ENCODE measurements at regions of chr13 and their contacts with region 1.

Region 1: GRCh38 chr13:95479731-95480130 is 72.8 kb upstream of the CLDN10 start:
- DNase-seq: no peak
- H3K4me3 ChIP-seq: no peak overlapping the region
- H3K27ac ChIP-seq: peak overlapping the region in 2 of 5 donors; percentile 47 to 58
- H3K4me1 ChIP-seq: peaks cover 10 to 13% of the 10 kb centered on the region in 2 donors
- H3K27me3 ChIP-seq: no peaks in the 10 kb centered on the region
- CTCF ChIP-seq: no peak
- POLR2A ChIP-seq: no peak

Region 2: DNA sequence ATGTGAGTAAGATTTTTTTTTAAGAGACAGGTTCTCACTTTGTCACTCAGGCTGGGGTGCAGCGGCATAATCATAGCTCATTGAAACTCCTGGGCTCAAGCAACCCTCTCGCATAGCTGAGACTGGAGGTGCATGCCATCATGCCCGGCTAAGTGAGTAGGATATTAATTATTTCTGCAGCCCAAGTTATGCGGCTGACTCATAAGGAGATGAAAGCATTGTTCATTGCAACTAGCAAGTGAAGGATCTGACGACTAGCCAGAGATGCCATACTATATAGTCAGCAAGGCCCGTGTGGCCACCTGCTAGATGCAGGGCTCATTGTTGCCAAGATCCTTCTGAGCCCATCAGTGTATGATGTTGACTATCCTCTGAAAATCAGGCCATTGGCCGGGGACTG is 223.6 kb before region 1 on chr13:
- intact Hi-C with region 1: no loop called
- DNase-seq: no peak
- H3K4me3 ChIP-seq: no peak overlapping the region
- H3K27ac ChIP-seq: no peak overlapping the region
- H3K4me1 ChIP-seq: no peaks in the 10 kb centered on the region
- H3K27me3 ChIP-seq: no peaks in the 10 kb centered on the region
- CTCF ChIP-seq: no peak
- POLR2A ChIP-seq: no peak

Region 3: DNA sequence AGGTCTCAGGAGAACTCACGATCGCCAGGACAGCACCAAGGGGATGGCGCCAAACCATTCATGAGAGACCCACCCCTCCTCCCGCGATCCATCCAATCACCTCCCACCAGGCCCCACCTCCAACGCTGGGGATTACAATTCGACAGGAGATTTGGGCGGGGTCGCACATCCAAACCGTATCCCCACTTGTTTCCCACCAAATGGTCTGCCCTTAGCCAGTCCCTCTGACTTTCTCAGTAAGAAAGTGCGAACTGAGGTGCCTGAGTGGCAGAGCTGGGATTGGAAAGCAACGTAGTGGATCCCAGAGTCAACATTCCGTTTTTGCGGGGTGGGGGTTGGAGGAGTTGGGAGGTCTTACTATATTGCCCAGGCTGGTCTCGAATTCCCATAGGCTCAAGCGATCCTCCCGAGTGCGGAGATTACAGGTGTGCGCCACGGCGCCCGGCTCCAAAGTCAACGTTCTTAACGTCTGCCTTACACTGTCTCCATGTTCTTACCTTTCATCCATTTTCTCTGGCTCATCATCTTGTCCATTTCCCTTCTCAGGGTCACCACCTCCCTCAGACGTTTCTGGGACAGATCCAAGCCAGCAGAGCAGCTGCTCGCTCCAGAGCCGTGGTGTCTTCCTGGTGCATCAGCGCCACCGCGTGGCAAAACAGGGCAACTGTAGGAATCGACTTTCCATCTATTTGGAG is 75.8 kb before region 1 on chr13:
- intact Hi-C with region 1: loop called in 1 of 2 experiments (anchors 10 kb)
- DNase-seq: peak; percentile 87 to 95 (median 89)
- H3K4me3 ChIP-seq: peak overlapping the region in 1 of 4 donors; percentile 16
- H3K27ac ChIP-seq: no peak overlapping the region
- H3K4me1 ChIP-seq: peaks cover 3 to 8% of the 10 kb centered on the region in 2 donors
- H3K27me3 ChIP-seq: no peaks in the 10 kb centered on the region
- CTCF ChIP-seq: peak; percentile 89 to 98 (median 95)
- POLR2A ChIP-seq: no peak